HCT116 (cell line): ENCODE measurements at regions of chr17 and their contacts with region 1.

Region 1: GRCh38 chr17:27677191-27677590 is 46.2 kb downstream of the LGALS9 start:
- DNase-seq: no peak
- ATAC-seq: no peak
- H3K4me3 ChIP-seq: no peak overlapping the region
- H3K27ac ChIP-seq: no peak overlapping the region
- H3K4me1 ChIP-seq: peaks cover 0 to 3% of the 10 kb centered on the region in 2 experiments; a peak in 1 of 4 replicates
- H3K27me3 ChIP-seq: no peaks in the 10 kb centered on the region
- CTCF ChIP-seq: no peak
- POLR2A ChIP-seq: no peak
- RAD21 ChIP-seq: no peak

Region 2: DNA sequence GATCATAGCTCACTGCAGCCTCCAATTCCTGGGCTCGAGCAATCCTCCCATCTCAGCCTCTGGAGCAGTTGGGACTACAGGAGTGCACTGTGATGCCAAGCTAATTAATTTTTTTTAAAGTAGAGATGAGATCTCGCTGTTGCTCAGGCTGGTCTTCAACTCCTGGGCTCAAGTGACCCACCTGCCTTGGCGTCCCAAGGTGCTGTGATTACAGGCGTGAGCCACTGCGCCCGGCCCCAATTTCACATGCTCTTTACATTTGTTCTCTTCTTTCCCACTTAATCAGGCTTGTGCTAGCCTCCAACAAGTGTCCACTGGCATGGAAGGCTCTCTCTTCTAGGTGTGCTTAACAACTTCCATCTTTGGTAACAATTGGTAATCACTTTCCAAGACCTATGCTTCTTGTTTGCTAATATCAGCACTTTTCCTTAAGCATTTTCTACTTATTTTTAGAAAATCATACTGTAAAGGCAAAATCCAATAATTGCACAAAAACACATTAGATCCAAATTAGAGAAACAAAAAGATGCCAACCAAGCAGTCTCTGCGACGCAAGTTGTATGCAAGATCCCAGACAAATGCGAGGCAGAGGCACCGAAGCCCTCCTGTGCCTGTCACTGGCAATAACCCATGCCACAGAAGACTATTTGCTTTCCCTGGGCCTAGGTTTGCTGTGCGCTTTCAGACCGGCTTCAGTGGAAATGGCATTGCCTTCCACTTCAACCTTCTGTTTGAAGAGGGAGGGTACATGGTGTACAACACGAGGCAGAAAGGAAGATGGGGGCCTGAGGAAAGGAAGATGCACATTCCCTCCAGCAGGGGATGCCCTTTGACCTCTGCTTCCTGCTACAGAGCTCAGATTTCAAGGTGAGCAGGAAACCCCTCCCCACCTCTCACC is 70.5 kb after region 1 on chr17:
- CTCF ChIA-PET with region 1: no interaction called
- POLR2A ChIA-PET with region 1: no interaction called
- RAD21 ChIA-PET with region 1: no interaction called
- intact Hi-C with region 1: loop called (anchors 10 kb)
- DNase-seq: peak; percentile 23
- ATAC-seq: peak; percentile 76
- H3K4me3 ChIP-seq: no peak overlapping the region
- H3K27ac ChIP-seq: no peak overlapping the region
- H3K4me1 ChIP-seq: peaks cover 0 to 4% of the 10 kb centered on the region in 2 experiments; a peak in 1 of 4 replicates
- H3K27me3 ChIP-seq: no peaks in the 10 kb centered on the region
- CTCF ChIP-seq: peak in 2 of 3 experiments; percentile 65 to 71; a peak in 4 of 6 replicates
- POLR2A ChIP-seq: no peak
- RAD21 ChIP-seq: no peak